ENCODE measurements at regions of chr12 and their contacts with region 1.

Region 1: GRCh38 chr12:120710031-120710804 is at the start of gene UNC119B:
- DNase-seq: peak; percentile 50
- H3K4me3 ChIP-seq: peak within 1 kb of the TSS; percentile 81 to 97 (median 93)
- H3K27ac ChIP-seq: peak within 1 kb of the TSS; percentile 84
- H3K4me1 ChIP-seq: peaks cover 15% of the 10 kb centered on the region
- H3K27me3 ChIP-seq: peaks cover 1% of the 10 kb centered on the region
- CTCF ChIP-seq: no peak
- total RNA-seq, gene UNC119B: 28.0 to 33.3 TPM

Region 2: DNA sequence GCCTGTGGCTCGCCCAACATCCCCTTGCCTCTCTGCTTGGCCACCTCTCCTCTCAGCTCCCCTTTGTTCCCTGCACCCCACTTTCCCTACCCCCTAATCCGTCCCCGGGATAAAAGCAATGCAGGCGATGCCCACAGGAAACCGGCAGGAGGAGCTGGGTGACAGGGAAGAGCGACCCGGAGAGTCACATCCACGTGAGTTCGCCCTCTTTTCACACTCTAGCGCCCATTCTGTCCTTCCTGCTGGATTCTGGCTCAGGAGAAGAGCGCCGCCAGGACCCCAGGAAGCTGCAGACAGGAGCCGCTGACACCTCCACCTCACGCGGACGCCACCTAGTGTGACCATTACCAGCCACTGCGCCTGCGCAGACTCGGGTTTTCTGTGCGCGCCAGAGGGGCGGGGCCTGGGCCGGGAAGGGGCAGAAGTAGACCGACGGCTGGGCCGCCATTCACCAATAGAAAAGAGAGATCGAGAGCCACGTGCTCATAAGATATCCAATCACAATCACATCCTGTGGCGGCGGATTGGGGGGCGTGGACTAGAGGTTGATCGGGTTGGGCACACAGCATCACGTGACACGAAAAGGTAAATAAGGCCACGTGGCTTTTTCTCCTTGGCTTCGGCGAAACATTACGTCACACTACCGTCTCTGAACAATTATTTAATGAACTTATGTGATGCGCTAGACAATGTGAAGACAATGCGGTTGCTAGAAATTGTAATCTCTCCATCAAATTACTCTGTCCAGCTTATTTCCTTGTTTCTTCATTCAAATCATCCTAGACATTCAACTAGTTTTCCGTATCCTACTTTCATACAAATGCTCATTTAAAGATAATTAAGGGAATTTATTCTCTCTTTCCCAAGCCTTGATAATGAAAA is 392.8 kb before region 1 on chr12:
- CTCF ChIA-PET with region 1: no interaction called
- dilution Hi-C with region 1: no loop called
- in situ Hi-C with region 1: loop called in 1 of 2 experiments (anchors 10 kb)
- intact Hi-C with region 1: no loop called
- DNase-seq: peak; percentile 100
- H3K4me3 ChIP-seq: peak overlapping the region; percentile 65 to 69 (median 66)
- H3K27ac ChIP-seq: peak overlapping the region; percentile 55
- H3K4me1 ChIP-seq: peaks cover 4% of the 10 kb centered on the region
- H3K27me3 ChIP-seq: no peaks in the 10 kb centered on the region
- CTCF ChIP-seq: peak; percentile 39 to 61

Region 3: DNA sequence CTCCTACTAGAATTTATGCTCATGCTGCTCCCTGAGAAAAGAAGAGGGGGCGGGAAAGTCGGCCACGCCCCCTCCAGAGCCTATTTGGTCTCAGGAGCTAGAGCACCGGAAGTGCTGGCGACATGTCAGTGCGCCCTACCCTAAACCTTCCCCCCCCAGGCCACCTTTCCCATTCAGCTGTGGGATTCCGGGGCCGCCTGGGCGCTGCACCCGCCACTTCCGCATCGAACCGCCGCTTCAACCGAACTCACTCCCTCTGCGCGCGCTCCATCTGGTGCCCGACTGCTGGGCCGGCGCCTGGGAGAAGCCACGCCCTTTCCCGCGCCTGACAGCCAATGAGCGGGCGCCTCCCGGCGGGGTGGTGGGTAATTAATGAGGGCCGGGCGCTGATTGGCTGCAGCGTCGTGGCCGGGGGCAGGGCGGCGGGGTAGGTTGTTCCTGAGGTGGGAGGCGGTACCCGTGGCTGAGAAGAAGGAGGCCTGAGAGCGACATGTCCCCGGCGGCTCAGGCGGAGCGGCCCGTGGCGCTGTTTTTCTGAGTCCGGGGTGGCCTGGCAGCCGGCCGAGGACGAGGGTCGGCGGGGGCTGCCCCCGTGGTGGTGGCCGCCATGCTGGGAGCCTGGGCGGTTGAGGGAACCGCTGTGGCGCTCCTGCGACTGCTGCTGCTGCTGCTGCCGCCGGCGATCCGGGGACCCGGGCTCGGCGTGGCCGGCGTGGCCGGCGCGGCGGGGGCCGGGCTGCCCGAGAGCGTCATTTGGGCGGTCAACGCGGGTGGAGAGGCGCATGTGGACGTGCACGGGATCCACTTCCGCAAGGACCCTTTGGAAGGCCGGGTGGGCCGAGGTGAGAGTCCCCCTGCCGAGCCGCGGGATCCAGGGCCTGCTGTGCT is 23.3 kb before region 1 on chr12 and contains the start of gene MLEC:
- CTCF ChIA-PET with region 1: no interaction called
- dilution Hi-C with region 1: no loop called
- in situ Hi-C with region 1: no loop called
- intact Hi-C with region 1: loop called (anchors 1 kb)
- DNase-seq: peak; percentile 98
- H3K4me3 ChIP-seq: peak within 1 kb of the TSS; percentile 73 to 98 (median 82)
- H3K27ac ChIP-seq: peak within 1 kb of the TSS; percentile 89
- H3K4me1 ChIP-seq: peaks cover 28% of the 10 kb centered on the region
- H3K27me3 ChIP-seq: no peaks in the 10 kb centered on the region
- CTCF ChIP-seq: peak in 1 of 2 donors; percentile 24
- total RNA-seq, gene MLEC: 64.7 to 114 TPM

Region 4: DNA sequence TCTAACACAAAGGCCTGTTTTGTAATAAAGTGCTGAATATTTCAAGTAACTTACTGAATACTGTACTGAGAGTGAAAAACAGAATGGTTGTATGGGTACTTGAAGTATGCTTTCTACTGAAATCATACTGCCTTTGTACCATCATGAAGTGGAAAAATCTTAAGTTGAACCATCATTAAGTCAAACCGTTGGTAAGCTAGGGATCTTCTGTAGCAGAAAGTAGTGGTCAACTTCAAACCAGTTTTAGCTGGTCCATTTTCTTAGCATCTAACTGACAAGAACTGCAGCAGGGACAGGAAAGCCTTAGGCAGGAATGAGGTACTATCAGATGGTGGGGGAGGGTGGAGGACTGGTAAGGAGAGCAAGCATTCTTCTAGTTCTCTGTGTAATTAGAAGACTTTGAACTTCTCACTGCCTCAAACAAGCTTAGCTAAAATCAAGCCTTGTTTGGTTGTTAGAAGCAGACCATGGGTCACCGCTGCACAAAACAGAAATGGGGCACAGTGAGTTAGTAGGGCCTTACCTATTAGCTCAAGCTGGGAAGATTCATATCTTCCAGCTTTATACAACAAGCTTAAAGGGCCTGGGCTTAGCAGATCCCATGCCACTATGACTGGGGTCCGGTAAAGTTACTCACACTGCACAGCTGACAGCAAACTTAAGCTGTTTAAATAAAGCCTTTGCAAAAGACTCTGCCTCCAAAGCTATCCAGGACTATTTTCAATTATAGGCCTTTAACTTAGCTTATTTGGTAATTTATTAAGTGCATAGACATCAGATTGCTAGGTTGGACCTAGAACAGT is 89.2 kb after region 1 on chr12:
- CTCF ChIA-PET with region 1: no interaction called
- dilution Hi-C with region 1: loop called (anchors 5 kb)
- in situ Hi-C with region 1: no loop called
- intact Hi-C with region 1: no loop called
- DNase-seq: no peak
- H3K4me3 ChIP-seq: no peak overlapping the region
- H3K27ac ChIP-seq: no peak overlapping the region
- H3K4me1 ChIP-seq: no peaks in the 10 kb centered on the region
- H3K27me3 ChIP-seq: no peaks in the 10 kb centered on the region
- CTCF ChIP-seq: no peak

Region 5: DNA sequence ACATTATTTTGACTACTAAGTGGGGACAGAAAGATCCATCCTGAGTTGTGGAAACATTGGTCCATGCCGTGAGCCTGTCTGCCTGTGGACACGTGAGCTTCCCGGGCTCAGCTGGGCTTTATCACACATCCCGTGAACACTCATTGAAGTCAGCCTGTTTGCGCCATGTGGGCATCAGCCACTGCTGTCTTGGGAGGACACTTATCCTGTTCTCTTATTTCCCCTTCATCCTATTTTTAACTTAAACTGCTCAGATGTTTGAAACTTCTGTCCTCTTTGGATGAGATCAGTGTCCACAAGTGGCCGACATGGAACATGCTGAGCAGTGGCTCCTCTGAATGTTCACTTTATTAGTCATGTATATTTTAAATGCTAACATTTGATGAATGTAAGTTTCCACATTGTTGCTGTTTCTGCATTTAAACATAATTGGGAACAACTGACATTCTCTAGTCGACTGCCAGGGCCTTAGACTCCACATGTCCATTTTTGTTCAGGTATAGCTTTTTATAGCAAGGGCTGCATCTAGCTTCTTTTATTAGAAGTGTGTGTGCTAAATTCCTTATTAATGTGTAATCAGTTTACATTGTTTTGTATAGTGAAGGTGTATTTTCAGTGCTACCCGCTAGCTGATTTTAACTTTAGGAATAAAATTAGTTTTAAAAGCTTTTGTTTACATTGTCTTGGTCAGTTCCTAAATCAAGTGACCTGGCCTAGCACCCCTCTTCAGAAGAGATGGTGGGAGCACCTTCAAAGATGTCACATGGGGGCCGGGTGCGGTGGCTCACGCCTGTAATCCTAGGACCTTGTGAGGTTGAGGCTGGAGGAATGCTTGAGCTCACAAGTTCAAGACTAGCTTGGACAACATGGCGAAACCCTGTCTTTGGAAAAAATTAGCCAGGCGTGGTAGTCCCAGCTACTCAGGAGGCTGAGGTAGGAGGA is 713.7 kb after region 1 on chr12:
- CTCF ChIA-PET with region 1: no interaction called
- dilution Hi-C with region 1: no loop called
- in situ Hi-C with region 1: no loop called
- intact Hi-C with region 1: no loop called
- DNase-seq: no peak
- H3K4me3 ChIP-seq: no peak overlapping the region
- H3K27ac ChIP-seq: no peak overlapping the region
- H3K4me1 ChIP-seq: no peaks in the 10 kb centered on the region
- H3K27me3 ChIP-seq: no peaks in the 10 kb centered on the region
- CTCF ChIP-seq: no peak